ENCODE measurements at regions of chr4 and their contacts with region 1.

Region 1: DNA sequence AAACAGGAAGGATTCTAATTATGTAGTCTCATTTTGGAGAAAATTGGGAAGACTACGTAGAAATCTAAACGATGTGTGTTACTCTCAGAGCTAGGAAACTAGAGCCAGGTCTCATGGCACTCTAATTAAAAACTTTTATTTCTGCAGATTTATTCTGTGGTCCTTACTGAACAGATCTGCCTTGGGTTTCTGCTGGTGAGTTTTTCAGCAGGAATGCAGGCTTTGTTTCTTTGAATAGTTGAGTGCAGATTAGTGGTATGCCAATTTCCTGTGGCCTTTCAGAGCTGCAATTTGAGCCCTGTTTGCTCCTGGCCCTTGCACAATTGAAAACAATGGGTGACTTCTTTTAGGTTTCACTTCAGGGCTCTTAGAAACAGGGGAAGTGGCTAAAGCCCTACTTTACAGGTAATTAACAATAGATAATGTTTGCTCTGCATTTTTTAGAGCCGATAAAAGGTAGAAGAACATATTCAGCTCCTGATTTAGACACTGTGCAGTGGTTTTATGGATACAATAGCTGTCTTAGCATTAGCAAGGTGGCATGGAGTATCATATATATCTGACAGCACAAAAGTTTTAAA is 21.8 kb downstream of the SPRY1 start:
- DNase-seq: peak; percentile 97
- ATAC-seq: peak; percentile 97
- H3K4me3 ChIP-seq: peak overlapping the region in 2 of 3 experiments; percentile 6 to 30; a peak in 2 of 6 replicates
- H3K27ac ChIP-seq: peak overlapping the region; percentile 70
- H3K4me1 ChIP-seq: peaks cover 72% of the 10 kb centered on the region
- H3K27me3 ChIP-seq: no peaks in the 10 kb centered on the region
- CTCF ChIP-seq: no peak
- EP300 ChIP-seq: peak in 1 of 2 experiments; percentile 95; a peak in 2 of 4 replicates
- POLR2A ChIP-seq: no peak
- RAD21 ChIP-seq: peak; percentile 21; the same call in 1 of the 2 replicates

Region 2: DNA sequence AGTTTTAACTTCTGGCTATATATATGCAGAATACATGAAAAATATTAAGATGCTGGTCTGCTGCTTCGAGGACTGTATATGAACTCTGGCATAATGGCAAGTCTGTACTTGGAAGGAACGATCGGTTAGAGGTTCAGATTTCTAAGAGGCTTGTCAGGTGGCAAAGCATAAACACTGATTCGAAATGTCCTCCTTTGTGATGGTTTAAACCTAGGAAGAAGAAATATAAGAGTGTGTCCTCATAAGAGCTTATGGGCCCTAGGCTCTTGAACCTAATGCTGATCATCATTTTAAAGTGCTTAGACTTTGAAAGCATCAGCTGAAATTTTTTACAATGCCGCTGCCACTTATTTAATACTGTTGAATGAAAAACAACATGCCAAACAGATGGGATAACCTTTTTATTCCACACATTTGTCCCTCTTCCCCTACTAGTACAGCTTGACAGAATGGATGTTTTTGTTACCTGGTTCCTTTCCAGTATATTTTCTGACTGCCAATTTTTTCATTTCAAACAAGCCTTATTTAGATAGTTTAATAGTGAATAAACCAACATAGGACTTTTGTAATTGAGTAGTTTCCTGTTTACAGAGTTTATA is 13.1 kb before region 1 on chr4:
- CTCF ChIA-PET with region 1: no interaction called
- POLR2A ChIA-PET with region 1: interaction called, 13 read pairs
- in situ Hi-C with region 1: no loop called
- intact Hi-C with region 1: loop called (anchors 1 kb)
- DNase-seq: no peak
- ATAC-seq: no peak
- H3K4me3 ChIP-seq: no peak overlapping the region
- H3K27ac ChIP-seq: no peak overlapping the region
- H3K4me1 ChIP-seq: peaks cover 93% of the 10 kb centered on the region
- H3K27me3 ChIP-seq: no peaks in the 10 kb centered on the region
- CTCF ChIP-seq: no peak
- EP300 ChIP-seq: no peak
- POLR2A ChIP-seq: no peak
- RAD21 ChIP-seq: no peak

Region 3: DNA sequence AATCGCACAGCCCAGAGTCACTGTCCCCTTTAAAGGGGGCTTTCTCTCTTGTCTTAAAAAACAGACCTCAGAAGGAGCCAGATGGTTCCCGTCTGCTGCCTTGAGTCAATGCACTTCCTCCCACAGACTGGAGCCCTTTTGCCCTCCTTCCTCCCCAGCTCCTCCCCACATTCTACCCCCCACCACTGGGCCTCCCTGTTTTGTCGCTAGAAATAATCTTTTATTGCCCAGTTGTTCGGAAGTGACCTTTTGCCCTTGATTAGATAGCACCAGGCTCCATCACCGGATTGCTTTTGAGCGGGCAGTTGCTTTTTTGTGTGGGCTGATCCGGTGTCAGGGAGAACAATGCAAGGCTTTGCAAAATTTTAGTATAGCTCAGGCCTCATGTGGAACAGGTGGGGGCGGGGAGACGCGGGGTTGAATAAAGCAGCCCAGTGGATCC is 25.9 kb after region 1 on chr4:
- CTCF ChIA-PET with region 1: no interaction called
- POLR2A ChIA-PET with region 1: interaction called, 7 read pairs
- in situ Hi-C with region 1: no loop called
- intact Hi-C with region 1: loop called (anchors 2 kb)
- DNase-seq: peak; percentile 93
- ATAC-seq: peak; percentile 89
- H3K4me3 ChIP-seq: peak overlapping the region in 2 of 3 experiments; percentile 18 to 43; a peak in 1 of 6 replicates
- H3K27ac ChIP-seq: peak overlapping the region; percentile 61
- H3K4me1 ChIP-seq: peaks cover 55% of the 10 kb centered on the region
- H3K27me3 ChIP-seq: no peaks in the 10 kb centered on the region
- CTCF ChIP-seq: no peak
- EP300 ChIP-seq: peak in 1 of 2 experiments; percentile 87; a peak in 2 of 4 replicates
- POLR2A ChIP-seq: no peak
- RAD21 ChIP-seq: no peak

Region 4: DNA sequence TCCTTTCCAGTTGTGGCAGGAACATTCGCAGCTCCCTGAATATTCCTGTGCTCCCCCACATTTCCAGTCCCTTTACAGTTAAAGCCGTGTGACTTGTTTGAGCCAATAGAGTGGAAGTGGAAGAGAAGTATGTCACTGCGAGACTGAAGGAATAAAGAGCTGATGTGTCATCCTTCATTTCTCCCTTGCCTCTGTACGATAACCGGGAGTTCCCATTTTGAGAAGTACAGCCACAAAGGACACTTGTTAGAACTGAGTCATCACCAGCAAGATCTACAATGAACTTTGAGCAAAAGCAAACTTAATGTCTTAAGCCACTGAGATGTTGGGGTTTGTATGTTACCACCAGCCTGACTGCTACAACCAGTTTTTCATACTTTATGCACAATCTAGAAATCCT is 70.5 kb after region 1 on chr4:
- CTCF ChIA-PET with region 1: no interaction called
- POLR2A ChIA-PET with region 1: no interaction called
- in situ Hi-C with region 1: no loop called
- intact Hi-C with region 1: no loop called
- DNase-seq: peak; percentile 80
- ATAC-seq: peak; percentile 74
- H3K4me3 ChIP-seq: no peak overlapping the region
- H3K27ac ChIP-seq: peak overlapping the region; percentile 17
- H3K4me1 ChIP-seq: peaks cover 40% of the 10 kb centered on the region
- H3K27me3 ChIP-seq: no peaks in the 10 kb centered on the region
- CTCF ChIP-seq: no peak
- EP300 ChIP-seq: peak in 1 of 2 experiments; percentile 50; a peak in 2 of 4 replicates
- POLR2A ChIP-seq: no peak
- RAD21 ChIP-seq: no peak